ENCODE measurements at regions of chr21 and their contacts with region 1.

Region 1: DNA sequence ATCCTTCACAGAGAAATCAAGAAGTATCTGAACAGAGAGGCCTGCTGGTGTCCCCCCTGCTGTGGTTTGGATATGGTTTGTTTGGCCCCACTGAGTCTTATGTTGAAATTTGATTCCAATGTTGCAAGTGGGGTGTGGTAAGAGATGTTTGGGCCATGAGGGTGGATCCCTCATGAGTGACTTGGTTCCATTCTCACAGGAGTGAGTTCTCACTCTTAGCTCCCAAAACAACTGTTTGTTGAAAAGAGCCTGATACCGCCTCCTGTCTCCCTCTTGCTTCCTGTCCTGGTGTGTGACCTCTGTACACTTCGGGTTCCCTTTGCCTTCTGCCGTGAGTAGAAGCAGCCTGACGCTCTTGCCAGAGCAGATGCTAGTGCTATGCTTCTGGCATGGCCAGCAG is 60.5 kb downstream of the C21orf91 start:
- DNase-seq: no peak
- H3K4me3 ChIP-seq: no peak overlapping the region
- H3K27ac ChIP-seq: no peak overlapping the region
- H3K4me1 ChIP-seq: no peaks in the 10 kb centered on the region
- CTCF ChIP-seq: no peak

Region 2: GRCh38 chr21:17699524-17700189 is 59.0 kb before region 1 on chr21:
- CTCF ChIA-PET with region 1: no interaction called
- POLR2A ChIA-PET with region 1: interaction called, 3 read pairs
- intact Hi-C with region 1: loop called (anchors 10 kb)
- DNase-seq: no peak
- H3K4me3 ChIP-seq: no peak overlapping the region
- H3K27ac ChIP-seq: no peak overlapping the region
- H3K4me1 ChIP-seq: no peaks in the 10 kb centered on the region
- CTCF ChIP-seq: no peak

Region 3: DNA sequence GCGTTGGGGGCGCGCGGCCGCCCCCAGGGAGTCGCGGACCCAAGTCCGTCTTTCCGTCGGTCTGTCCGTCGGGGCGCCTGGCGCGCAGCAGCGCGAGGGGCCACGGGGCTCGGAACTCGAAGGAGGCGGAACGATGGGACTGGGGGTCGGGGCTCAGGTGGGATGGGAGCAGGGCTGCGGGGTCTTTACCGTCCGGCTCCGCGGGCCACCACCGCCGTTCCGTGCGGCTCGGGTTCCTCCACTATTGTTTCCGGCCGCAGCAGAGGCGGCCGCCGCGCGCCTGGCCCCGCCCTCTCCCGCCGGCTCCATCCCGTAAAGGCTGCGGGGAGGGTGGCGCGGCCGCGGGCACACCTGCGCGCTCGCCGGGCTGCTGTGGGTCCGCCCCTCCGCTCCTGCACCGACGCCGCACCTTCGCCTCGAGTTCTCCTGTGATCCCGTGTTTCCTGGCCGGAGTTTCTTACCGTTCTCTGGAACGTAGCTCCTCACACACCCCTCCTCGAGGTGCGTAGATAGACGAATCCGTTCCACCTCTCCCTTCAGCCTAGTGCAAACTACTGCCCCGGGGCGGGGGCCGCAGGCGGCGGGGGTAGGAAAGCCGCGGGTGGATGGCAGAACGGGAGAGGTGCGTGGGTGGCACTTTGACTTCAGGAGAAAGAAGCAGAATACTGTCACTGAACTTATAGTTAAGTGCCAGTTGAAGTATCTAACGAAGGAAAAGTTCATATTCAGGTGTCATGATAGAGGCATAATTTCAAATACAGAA is 60.6 kb after region 1 on chr21 and contains the start of gene C21orf91:
- CTCF ChIA-PET with region 1: no interaction called
- POLR2A ChIA-PET with region 1: no interaction called
- intact Hi-C with region 1: no loop called
- DNase-seq: peak; percentile 94
- H3K4me3 ChIP-seq: peak within 1 kb of the TSS; percentile 89
- H3K27ac ChIP-seq: peak within 1 kb of the TSS; percentile 74
- H3K4me1 ChIP-seq: peaks cover 28% of the 10 kb centered on the region
- CTCF ChIP-seq: no peak
- total RNA-seq, gene C21orf91: 13.8 and 15.8 TPM in 2 replicates

Measured in OCI-LY7 (cell line).